Caco-2 (cell line): ENCODE measurements at regions of chr6 and their contacts with region 1.

Region 1: DNA sequence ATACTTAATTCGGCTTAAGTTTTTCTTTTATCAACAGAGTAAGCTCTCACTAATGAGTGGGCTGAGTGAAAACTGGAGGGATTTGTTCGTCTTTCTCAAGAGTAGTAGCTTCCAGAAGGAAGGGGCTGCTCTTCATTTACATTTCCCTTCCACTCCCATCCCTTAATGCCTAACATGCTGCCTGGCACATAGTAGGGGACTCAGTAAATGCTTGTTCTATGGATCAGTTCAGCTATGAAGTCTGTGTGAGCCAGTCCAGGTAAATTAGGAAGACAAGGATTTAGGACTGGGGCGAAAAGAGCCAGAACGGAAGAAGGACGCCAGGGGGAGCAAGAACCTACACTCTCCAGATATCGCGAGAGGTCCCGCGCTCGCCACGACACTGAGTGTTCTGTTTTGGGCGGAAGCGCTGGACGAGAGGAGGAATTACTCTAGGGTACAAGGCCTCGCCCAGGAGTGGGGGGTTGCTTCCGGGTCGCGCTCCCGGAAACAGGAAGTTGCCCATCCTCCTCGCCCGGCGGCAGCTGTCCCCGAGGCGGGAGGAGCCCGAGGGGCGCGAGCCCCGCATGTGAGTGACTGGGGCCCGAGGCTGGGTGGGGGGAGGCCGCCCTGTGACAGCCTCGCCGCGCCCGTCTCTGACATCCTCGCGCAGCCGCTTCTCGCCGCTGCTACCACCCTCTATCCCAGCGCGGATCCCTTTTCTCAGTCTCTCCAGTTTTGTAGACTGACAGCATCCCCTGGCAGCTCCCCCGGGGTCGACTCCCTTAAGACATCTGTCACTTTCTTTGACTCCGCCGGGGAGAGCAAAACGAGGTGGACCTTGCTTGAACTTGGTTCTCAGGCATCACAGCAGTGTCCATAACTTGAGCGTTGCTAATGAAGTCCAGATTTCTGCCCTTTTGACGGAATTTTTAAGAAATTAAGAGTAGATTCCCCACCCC is at the start of gene C6orf89:
- DNase-seq: peak; percentile 94 to 97
- H3K4me3 ChIP-seq: peak within 1 kb of the TSS; percentile 80
- H3K4me3 Mint-ChIP-seq: peak within 1 kb of the TSS; percentile 83
- H3K27ac Mint-ChIP-seq: peak within 1 kb of the TSS; percentile 80
- H3K4me1 ChIP-seq: peaks cover 4% of the 10 kb centered on the region; the same call in 1 of the 2 replicates
- H3K4me1 Mint-ChIP-seq: peaks cover 16% of the 10 kb centered on the region
- H3K27me3 ChIP-seq: no peaks in the 10 kb centered on the region
- H3K27me3 Mint-ChIP-seq: no peaks in the 10 kb centered on the region
- CTCF ChIP-seq: peak; percentile 84 to 88
- total RNA-seq, gene C6orf89: 24.4 and 24.5 TPM in 2 replicates

Region 2: GRCh38 chr6:36874443-36875249 is 11.1 kb before region 1 on chr6 and contains the start of gene PPIL1:
- CTCF ChIA-PET with region 1: interaction called, 31 read pairs
- POLR2A ChIA-PET with region 1: interaction called, 11 read pairs
- intact Hi-C with region 1: loop called (anchors 1 kb)
- DNase-seq: peak; percentile 83 to 85
- H3K4me3 ChIP-seq: peak within 1 kb of the TSS; percentile 78
- H3K4me3 Mint-ChIP-seq: peak within 1 kb of the TSS; percentile 92
- H3K27ac Mint-ChIP-seq: peak within 1 kb of the TSS; percentile 98
- H3K4me1 ChIP-seq: 0 out of 2 replicates have a peak, but pooled peaks cover 5% of the 10 kb centered on the region
- H3K4me1 Mint-ChIP-seq: peaks cover 8% of the 10 kb centered on the region
- H3K27me3 ChIP-seq: no peaks in the 10 kb centered on the region
- H3K27me3 Mint-ChIP-seq: no peaks in the 10 kb centered on the region
- CTCF ChIP-seq: peak in 1 of 2 experiments; percentile 14
- total RNA-seq, gene PPIL1: 57.7 and 61.2 TPM in 2 replicates

Region 3: DNA sequence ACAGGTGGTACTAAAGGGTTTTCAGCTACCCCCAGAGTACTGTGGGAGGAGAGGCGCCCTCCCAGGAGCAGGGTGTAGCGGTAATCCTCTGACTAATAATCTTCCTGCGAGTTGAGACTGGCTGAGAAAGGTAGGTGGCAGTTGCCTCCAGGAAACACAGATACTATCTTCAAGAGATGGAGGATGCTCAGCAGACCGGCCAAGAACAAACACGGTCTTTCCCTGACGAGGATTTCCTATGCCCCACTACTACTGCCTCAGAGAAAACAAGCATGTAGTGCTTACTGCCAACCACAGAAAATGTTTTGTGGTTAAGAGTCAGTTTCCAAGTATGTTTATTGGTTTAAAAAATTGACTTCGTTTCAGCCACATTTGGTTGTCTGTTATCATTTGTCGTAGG is 26.9 kb after region 1 on chr6:
- CTCF ChIA-PET with region 1: interaction called, 15 read pairs
- POLR2A ChIA-PET with region 1: no interaction called
- intact Hi-C with region 1: loop called (anchors 1 kb)
- DNase-seq: no peak
- H3K4me3 ChIP-seq: no peak overlapping the region
- H3K4me3 Mint-ChIP-seq: no peak overlapping the region
- H3K27ac Mint-ChIP-seq: no peak overlapping the region
- H3K4me1 ChIP-seq: peaks cover 16% of the 10 kb centered on the region
- H3K4me1 Mint-ChIP-seq: peaks cover 7% of the 10 kb centered on the region
- H3K27me3 ChIP-seq: no peaks in the 10 kb centered on the region
- H3K27me3 Mint-ChIP-seq: no peaks in the 10 kb centered on the region
- CTCF ChIP-seq: no peak

Region 4: GRCh38 chr6:36985808-36986703 is 100.3 kb after region 1 on chr6 and contains the start of gene MTCH1:
- CTCF ChIA-PET with region 1: no interaction called
- POLR2A ChIA-PET with region 1: no interaction called
- intact Hi-C with region 1: loop called (anchors 1 kb)
- DNase-seq: peak; percentile 84 to 93
- H3K4me3 ChIP-seq: peak within 1 kb of the TSS; percentile 98
- H3K4me3 Mint-ChIP-seq: no peak within 1 kb of the TSS
- H3K27ac Mint-ChIP-seq: peak within 1 kb of the TSS; percentile 94
- H3K4me1 ChIP-seq: peaks cover 6% of the 10 kb centered on the region; the same call in 1 of the 2 replicates
- H3K4me1 Mint-ChIP-seq: peaks cover 12% of the 10 kb centered on the region
- H3K27me3 ChIP-seq: no peaks in the 10 kb centered on the region
- H3K27me3 Mint-ChIP-seq: no peaks in the 10 kb centered on the region
- CTCF ChIP-seq: no peak
- total RNA-seq, gene MTCH1: 170 and 178 TPM in 2 replicates